Activated T-helper 1 cell treated with anti-CD3 and anti-CD28 coated beads, Interleukin-12 subunit alpha, Interleukin-12 subunit beta, Interleukin-2, Interleukin-4 antibody, amounts not matched to agents 30 ng/mL and 10 ng/mL and 1 ng/mL, durations not matched to agents 14 hours and 24 hours and 36 hours (primary cell): ENCODE measurements at regions of chr21 and their contacts with region 1.

Region 1: GRCh38 chr21:33380483-33380998 is 22.7 kb upstream of the IFNGR2 start:
- DNase-seq: peak; percentile 70
- H3K4me3 Mint-ChIP-seq: peak overlapping the region; percentile 23
- H3K27ac Mint-ChIP-seq: peak overlapping the region; percentile 84
- H3K4me1 Mint-ChIP-seq: peaks cover 54% of the 10 kb centered on the region
- H3K27me3 Mint-ChIP-seq: peaks cover 40% of the 10 kb centered on the region

Region 2: GRCh38 chr21:32612075-32612998 is 768.2 kb before region 1 on chr21 and contains the start of gene CFAP298:
- intact Hi-C with region 1: loop called (anchors 5 kb)
- DNase-seq: peak; percentile 84
- H3K4me3 Mint-ChIP-seq: peak within 1 kb of the TSS; percentile 96
- H3K27ac Mint-ChIP-seq: peak within 1 kb of the TSS; percentile 93
- H3K4me1 Mint-ChIP-seq: peaks cover 8% of the 10 kb centered on the region
- H3K27me3 Mint-ChIP-seq: peaks cover 4% of the 10 kb centered on the region
- total RNA-seq, gene CFAP298: 52.9 and 54.6 TPM in 2 replicates

Region 3: DNA sequence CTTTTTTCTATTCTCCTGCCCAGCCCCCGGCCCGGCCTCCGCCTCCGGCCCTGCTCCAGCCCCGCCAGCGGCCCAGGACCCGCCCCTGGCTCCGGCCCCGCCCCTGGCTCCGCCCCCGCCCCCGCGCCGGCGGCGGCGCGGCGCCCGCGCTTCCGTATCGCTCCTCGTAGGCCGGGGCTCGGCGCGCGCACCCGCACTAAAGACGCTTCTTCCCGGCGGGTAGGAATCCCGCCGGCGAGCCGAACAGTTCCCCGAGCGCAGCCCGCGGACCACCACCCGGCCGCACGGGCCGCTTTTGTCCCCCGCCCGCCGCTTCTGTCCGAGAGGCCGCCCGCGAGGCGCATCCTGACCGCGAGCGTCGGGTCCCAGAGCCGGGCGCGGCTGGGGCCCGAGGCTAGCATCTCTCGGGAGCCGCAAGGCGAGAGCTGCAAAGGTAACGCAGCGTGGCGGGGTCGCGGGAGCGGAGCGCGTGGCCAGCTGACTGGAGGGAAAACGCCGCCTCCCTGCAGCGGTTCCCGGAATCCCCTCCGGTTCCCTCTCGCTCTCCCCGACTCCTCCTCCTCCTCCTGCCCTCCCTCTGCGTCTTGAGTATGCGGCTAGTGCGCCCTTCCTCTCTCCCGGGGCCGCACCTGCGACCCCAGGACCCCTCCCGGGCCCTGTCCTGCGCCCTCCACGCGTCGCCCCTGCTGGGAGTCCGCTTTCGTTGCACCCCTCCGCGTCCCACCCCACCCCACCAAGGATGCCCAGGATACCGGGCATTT is 150.6 kb before region 1 on chr21 and contains the start of gene IFNAR2:
- intact Hi-C with region 1: loop called (anchors 1 kb)
- DNase-seq: peak; percentile 68
- H3K4me3 Mint-ChIP-seq: peak within 1 kb of the TSS; percentile 88
- H3K27ac Mint-ChIP-seq: peak within 1 kb of the TSS; percentile 87
- H3K4me1 Mint-ChIP-seq: peaks cover 49% of the 10 kb centered on the region
- H3K27me3 Mint-ChIP-seq: peaks cover 5% of the 10 kb centered on the region
- total RNA-seq, gene IFNAR2: 33.3 and 33.5 TPM in 2 replicates

Region 4: GRCh38 chr21:33266050-33266788 is 114.3 kb before region 1 on chr21 and contains the start of gene IL10RB:
- intact Hi-C with region 1: no loop called
- DNase-seq: peak; percentile 66
- H3K4me3 Mint-ChIP-seq: peak within 1 kb of the TSS; percentile 97
- H3K27ac Mint-ChIP-seq: peak within 1 kb of the TSS; percentile 92
- H3K4me1 Mint-ChIP-seq: peaks cover 33% of the 10 kb centered on the region
- H3K27me3 Mint-ChIP-seq: no peaks in the 10 kb centered on the region
- total RNA-seq, gene IL10RB: 20.5 and 21.4 TPM in 2 replicates

Region 5: GRCh38 chr21:33324291-33325221 is 56.0 kb before region 1 on chr21 and contains the start of gene IFNAR1:
- intact Hi-C with region 1: loop called (anchors 1 kb)
- DNase-seq: peak; percentile 98
- H3K4me3 Mint-ChIP-seq: no peak within 1 kb of the TSS
- H3K27ac Mint-ChIP-seq: no peak within 1 kb of the TSS
- H3K4me1 Mint-ChIP-seq: peaks cover 23% of the 10 kb centered on the region
- H3K27me3 Mint-ChIP-seq: peaks cover 6% of the 10 kb centered on the region
- total RNA-seq, gene IFNAR1: 20.4 and 20.7 TPM in 2 replicates

Region 6: GRCh38 chr21:33403779-33404585 is 23.4 kb after region 1 on chr21:
- intact Hi-C with region 1: loop called (anchors 1 kb)
- DNase-seq: no peak
- H3K4me3 Mint-ChIP-seq: peak overlapping the region; percentile 83
- H3K27ac Mint-ChIP-seq: peak overlapping the region; percentile 61
- H3K4me1 Mint-ChIP-seq: peaks cover 34% of the 10 kb centered on the region
- H3K27me3 Mint-ChIP-seq: peaks cover 74% of the 10 kb centered on the region

Region 7: GRCh38 chr21:33479679-33480480 is 99.3 kb after region 1 on chr21 and contains the start of gene TMEM50B:
- intact Hi-C with region 1: loop called (anchors 1 kb)
- DNase-seq: peak; percentile 93
- H3K4me3 Mint-ChIP-seq: peak within 1 kb of the TSS; percentile 88
- H3K27ac Mint-ChIP-seq: peak within 1 kb of the TSS; percentile 84
- H3K4me1 Mint-ChIP-seq: peaks cover 23% of the 10 kb centered on the region
- H3K27me3 Mint-ChIP-seq: peaks cover 6% of the 10 kb centered on the region
- total RNA-seq, gene TMEM50B: 12.0 and 14.0 TPM in 2 replicates